ENCODE measurements at regions of chr11 and their contacts with region 1.

Region 1: DNA sequence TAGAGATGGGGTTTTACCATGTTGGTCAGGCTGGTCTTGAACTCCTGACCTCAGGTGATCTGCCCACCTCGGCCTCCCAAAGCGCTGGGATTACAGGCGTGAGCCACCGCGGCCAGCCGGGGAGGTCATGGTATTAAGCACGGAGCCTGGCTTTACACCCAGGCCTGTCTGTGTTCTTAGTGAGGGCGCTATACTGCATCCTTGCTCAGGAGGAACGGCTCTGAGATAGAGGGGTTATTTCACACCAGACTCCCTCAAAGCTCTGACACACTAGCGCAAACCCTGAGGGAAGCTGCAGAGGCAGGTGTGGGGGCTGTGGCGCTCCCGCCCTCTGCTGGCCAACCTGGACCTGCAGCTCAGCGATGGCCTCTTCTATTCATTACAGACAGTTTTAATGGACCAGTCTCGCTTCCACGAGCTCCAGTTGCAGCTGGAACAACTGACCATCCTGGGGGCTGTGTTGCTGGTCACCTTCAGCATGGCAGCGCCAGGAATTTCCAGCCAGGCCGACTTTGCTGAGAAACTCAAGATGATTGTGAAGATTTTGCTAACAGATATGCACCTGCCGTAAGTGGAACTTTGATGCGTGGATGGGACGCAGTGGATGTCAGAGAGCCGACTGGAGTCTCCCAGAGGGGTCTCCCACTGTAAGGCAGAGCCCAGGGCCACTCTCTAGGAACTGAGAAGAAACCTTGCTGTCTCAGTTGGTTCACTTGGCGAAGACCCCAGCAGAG is 26.2 kb downstream of the TCP11L1 start:
- DNase-seq: peak; percentile 34
- H3K4me3 ChIP-seq: no peak overlapping the region
- H3K27ac ChIP-seq: no peak overlapping the region
- H3K27me3 ChIP-seq: no peaks in the 10 kb centered on the region
- CTCF ChIP-seq: peak; percentile 96

Region 2: GRCh38 chr11:32809313-32809712 is 256.3 kb before region 1 on chr11:
- CTCF ChIA-PET with region 1: interaction called, 29 read pairs
- POLR2A ChIA-PET with region 1: no interaction called
- DNase-seq: peak; percentile 48
- H3K4me3 ChIP-seq: no peak overlapping the region
- H3K27ac ChIP-seq: no peak overlapping the region
- H3K27me3 ChIP-seq: peaks cover 6% of the 10 kb centered on the region
- CTCF ChIP-seq: peak; percentile 90

Region 3: GRCh38 chr11:32953700-32954099 is 111.9 kb before region 1 on chr11:
- CTCF ChIA-PET with region 1: interaction called, 26 read pairs
- POLR2A ChIA-PET with region 1: no interaction called
- DNase-seq: no peak
- H3K4me3 ChIP-seq: no peak overlapping the region
- H3K27ac ChIP-seq: no peak overlapping the region
- H3K27me3 ChIP-seq: no peaks in the 10 kb centered on the region
- CTCF ChIP-seq: no peak

Region 4: DNA sequence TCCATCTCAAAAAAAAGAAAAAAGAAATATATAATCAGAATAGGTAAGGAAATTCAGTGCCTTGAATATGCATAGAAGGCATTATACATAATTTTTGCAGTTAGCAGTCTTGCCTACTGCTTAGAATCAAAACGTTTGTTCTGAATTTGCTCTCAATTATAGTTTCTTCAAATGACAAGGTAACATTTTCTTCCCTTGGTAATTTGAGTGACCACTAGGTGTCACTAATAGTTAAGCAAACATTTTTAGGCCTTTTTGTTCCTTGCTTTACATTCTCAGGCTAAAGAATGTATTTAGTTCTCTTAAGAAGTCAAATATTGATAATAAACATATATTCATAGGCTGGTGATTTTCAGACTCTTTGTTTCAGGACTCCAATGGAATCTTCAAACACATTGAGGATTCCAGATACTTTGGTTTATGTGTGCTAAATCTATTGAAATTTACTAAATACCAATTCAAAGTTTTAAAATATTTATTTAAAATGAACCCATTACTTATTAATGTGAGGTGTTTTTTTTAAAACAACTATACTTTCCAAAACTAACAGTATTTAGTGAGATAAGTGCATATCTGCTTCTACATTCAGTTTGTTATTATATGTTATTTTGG is 105.0 kb before region 1 on chr11:
- CTCF ChIA-PET with region 1: interaction called, 110 read pairs
- POLR2A ChIA-PET with region 1: no interaction called
- DNase-seq: peak; percentile 27
- H3K4me3 ChIP-seq: no peak overlapping the region
- H3K27ac ChIP-seq: no peak overlapping the region
- H3K27me3 ChIP-seq: no peaks in the 10 kb centered on the region
- CTCF ChIP-seq: peak; percentile 68

Region 5: GRCh38 chr11:32968541-32968940 is 97.1 kb before region 1 on chr11:
- CTCF ChIA-PET with region 1: interaction called, 57 read pairs
- POLR2A ChIA-PET with region 1: no interaction called
- DNase-seq: no peak
- H3K4me3 ChIP-seq: no peak overlapping the region
- H3K27ac ChIP-seq: no peak overlapping the region
- H3K27me3 ChIP-seq: no peaks in the 10 kb centered on the region
- CTCF ChIP-seq: no peak

Region 6: GRCh38 chr11:33000181-33000580 is 65.4 kb before region 1 on chr11:
- CTCF ChIA-PET with region 1: interaction called, 10 read pairs
- POLR2A ChIA-PET with region 1: no interaction called
- DNase-seq: peak; percentile 50
- H3K4me3 ChIP-seq: no peak overlapping the region
- H3K27ac ChIP-seq: peak overlapping the region; percentile 4
- H3K27me3 ChIP-seq: no peaks in the 10 kb centered on the region
- CTCF ChIP-seq: no peak

Region 7: DNA sequence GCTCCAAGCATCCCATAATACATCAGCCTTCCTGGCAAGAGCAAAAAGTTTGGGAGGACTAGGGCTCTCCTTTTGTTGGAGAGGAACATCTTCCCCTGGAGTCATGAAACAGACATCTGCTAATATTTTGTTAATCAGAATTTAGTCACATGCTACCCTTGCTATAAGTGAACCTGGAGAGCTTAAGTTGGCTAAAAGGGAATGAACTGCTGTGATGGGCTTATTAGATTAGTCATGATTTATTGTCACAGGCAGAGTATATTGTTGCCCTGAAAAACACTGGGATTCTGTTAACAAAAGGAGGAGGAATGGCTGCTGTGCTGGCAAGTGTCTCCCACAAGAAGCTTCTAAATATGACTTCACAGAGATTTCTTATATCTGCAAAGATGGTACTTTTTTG is 10.3 kb before region 1 on chr11:
- CTCF ChIA-PET with region 1: interaction called, 26 read pairs
- POLR2A ChIA-PET with region 1: no interaction called
- DNase-seq: no peak
- H3K4me3 ChIP-seq: no peak overlapping the region
- H3K27ac ChIP-seq: no peak overlapping the region
- H3K27me3 ChIP-seq: no peaks in the 10 kb centered on the region
- CTCF ChIP-seq: no peak

Region 8: GRCh38 chr11:33109294-33109895 is 43.8 kb after region 1 on chr11:
- CTCF ChIA-PET with region 1: no interaction called
- POLR2A ChIA-PET with region 1: no interaction called
- DNase-seq: no peak
- H3K4me3 ChIP-seq: no peak overlapping the region
- H3K27ac ChIP-seq: no peak overlapping the region
- H3K27me3 ChIP-seq: no peaks in the 10 kb centered on the region
- CTCF ChIP-seq: no peak

Measured in AG04450 (cell line).